ENCODE measurements at regions of chr5 and their contacts with region 1.

Region 1: GRCh38 chr5:159010661-159011442 is 88.9 kb downstream of the EBF1 start:
- DNase-seq: peak; percentile 84
- ATAC-seq: peak; percentile 91
- H3K4me3 ChIP-seq: peak overlapping the region; percentile 63
- H3K27ac ChIP-seq: peak overlapping the region; percentile 90
- H3K4me1 ChIP-seq: peaks cover 17% of the 10 kb centered on the region
- H3K27me3 ChIP-seq: no peaks in the 10 kb centered on the region
- CTCF ChIP-seq: no peak
- EP300 ChIP-seq: peak in 1 of 2 experiments; percentile 43; a peak in 1 of 4 replicates
- POLR2A ChIP-seq: peak; percentile 50
- RAD21 ChIP-seq: no peak

Region 2: DNA sequence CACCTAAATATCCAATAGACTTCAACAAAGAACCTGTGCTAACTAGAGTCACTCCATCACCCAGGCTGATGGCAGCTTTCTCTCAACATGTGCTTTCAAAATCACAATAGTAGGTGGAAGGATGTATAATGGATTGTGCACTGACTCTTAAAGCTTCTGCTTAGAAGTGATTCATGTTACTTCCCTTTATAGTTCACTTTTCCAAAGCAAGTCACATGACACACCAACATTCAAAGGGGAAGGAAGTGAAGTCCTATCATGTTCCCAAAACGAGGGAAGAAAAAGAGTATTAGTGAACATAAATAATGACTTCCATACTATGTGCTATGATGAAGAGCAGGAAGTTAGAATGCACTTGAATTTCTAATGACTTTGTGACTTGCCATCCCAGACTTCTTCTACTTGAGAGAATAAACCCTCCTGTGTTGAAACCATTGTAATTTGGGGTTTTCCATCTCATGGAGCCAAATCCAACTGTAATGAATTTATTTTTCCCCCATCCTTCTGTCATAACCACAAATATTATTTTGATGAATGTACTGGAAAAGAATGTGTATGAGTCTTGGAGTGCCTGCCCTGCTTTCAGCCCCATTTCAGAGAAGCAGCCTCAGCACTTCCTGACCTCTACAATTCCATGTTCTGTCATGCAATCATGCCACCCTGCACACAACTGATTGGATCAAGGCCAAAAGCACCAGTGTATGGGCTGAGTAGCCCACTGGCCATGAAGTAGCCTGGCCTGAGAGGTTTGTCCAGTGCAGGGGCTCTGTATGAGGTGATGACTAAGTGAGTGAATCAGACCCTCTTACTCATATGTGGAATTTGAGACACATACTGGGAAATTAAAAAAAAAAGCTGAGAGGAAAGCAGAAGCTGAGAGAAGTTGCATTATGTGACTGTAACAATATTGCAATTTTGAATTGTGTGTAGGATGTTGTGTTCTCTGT is 626.0 kb before region 1 on chr5:
- CTCF ChIA-PET with region 1: no interaction called
- POLR2A ChIA-PET with region 1: no interaction called
- RAD21 ChIA-PET with region 1: no interaction called
- SMC1A ChIA-PET with region 1: no interaction called
- in situ Hi-C with region 1: no loop called
- intact Hi-C with region 1: no loop called
- DNase-seq: no peak
- ATAC-seq: no peak
- H3K4me3 ChIP-seq: no peak overlapping the region
- H3K27ac ChIP-seq: no peak overlapping the region
- H3K4me1 ChIP-seq: no peaks in the 10 kb centered on the region; the same call in 1 of the 2 replicates
- H3K27me3 ChIP-seq: no peaks in the 10 kb centered on the region
- CTCF ChIP-seq: no peak
- EP300 ChIP-seq: no peak
- POLR2A ChIP-seq: no peak
- RAD21 ChIP-seq: no peak

Region 3: DNA sequence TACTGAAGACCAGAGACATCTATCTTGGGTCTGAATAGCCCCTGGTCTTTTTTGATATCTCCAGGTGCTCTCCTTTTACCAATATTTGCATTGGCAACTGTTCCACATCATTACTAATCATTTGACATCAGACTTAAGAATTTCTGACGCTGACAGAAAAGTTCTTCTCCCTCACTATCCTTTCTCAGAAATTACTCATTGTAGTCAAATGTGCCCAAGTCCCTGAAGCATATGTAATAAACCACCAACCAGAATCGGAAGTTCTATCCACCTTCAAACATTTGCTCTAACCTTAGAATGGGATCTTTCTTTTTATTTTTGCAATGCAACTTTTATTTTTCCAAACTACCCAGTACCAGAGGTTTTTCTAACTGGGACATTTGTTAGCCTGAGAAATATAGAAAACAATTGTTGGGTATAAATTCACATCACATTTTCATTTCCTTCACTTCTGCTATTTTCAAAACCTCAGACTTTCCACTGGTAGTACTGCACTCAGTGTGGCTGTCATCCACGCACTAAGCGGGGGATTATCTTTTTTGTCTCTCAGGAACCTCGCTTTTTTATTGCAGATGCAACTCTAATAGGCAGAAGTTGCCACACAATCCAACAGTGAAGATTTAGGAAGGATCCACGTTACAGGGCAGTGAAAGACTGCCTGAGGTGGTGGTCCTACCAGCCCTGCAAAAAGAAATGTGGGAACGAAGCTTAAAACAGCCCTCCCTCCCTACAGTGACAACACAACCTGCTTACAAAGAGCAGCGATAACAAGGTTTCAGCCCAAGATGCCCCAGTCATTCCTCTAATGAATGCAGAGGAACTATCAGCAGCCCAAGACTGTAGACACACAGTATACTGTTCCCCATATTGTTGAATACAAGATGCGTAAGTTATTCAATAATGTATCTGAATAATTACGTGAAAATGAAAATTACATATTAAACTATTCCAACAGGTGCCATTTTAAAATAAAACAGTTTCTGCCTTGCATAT is 112.4 kb before region 1 on chr5:
- CTCF ChIA-PET with region 1: no interaction called
- POLR2A ChIA-PET with region 1: interaction called, 3 read pairs
- RAD21 ChIA-PET with region 1: interaction called, 4 read pairs
- SMC1A ChIA-PET with region 1: interaction called, 6 read pairs
- in situ Hi-C with region 1: no loop called
- intact Hi-C with region 1: loop called (anchors 5 kb)
- DNase-seq: no peak
- ATAC-seq: peak; percentile 82
- H3K4me3 ChIP-seq: 0 out of 2 replicates have a peak overlapping the region, but pooled peaks have one; percentile 15
- H3K27ac ChIP-seq: peak overlapping the region; percentile 83
- H3K4me1 ChIP-seq: peaks cover 14% of the 10 kb centered on the region
- H3K27me3 ChIP-seq: no peaks in the 10 kb centered on the region
- CTCF ChIP-seq: no peak
- EP300 ChIP-seq: peak; percentile 70 to 74; a peak in 3 of 4 replicates
- POLR2A ChIP-seq: no peak
- RAD21 ChIP-seq: no peak

Region 4: DNA sequence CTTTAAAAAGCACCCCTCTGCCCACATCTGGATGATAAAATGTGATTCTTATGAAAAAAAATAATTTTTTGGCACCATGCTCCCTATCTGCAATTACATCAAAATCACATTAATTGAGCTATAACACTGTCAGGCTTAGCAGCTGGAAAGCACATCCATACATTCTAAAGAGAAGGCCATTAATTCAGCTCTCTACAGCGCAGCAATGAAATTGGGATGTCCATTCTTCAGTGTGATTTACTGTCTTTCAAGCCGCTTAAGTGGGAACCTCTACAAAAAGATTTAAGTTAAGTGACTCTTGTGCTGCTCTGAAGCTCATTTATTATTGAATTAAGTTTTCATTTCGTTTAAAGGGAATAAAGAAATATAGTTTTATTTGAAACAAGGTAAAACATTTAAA is 82.5 kb before region 1 on chr5:
- CTCF ChIA-PET with region 1: no interaction called
- POLR2A ChIA-PET with region 1: interaction called, 15 read pairs
- RAD21 ChIA-PET with region 1: interaction called, 6 read pairs
- SMC1A ChIA-PET with region 1: interaction called, 16 read pairs
- in situ Hi-C with region 1: no loop called
- intact Hi-C with region 1: no loop called
- DNase-seq: no peak
- ATAC-seq: no peak
- H3K4me3 ChIP-seq: no peak overlapping the region
- H3K27ac ChIP-seq: no peak overlapping the region
- H3K4me1 ChIP-seq: peaks cover 3% of the 10 kb centered on the region
- H3K27me3 ChIP-seq: no peaks in the 10 kb centered on the region
- CTCF ChIP-seq: no peak
- EP300 ChIP-seq: no peak
- POLR2A ChIP-seq: no peak
- RAD21 ChIP-seq: no peak

Region 5: GRCh38 chr5:158995694-158996173 is 15.1 kb before region 1 on chr5:
- CTCF ChIA-PET with region 1: interaction called, 9 read pairs
- POLR2A ChIA-PET with region 1: interaction called, 11 read pairs
- RAD21 ChIA-PET with region 1: interaction called, 12 read pairs
- SMC1A ChIA-PET with region 1: interaction called, 21 read pairs
- in situ Hi-C with region 1: no loop called
- intact Hi-C with region 1: no loop called
- DNase-seq: no peak
- ATAC-seq: peak; percentile 93
- H3K4me3 ChIP-seq: no peak overlapping the region
- H3K27ac ChIP-seq: no peak overlapping the region
- H3K4me1 ChIP-seq: peaks cover 6% of the 10 kb centered on the region; the same call in 1 of the 2 replicates
- H3K27me3 ChIP-seq: no peaks in the 10 kb centered on the region
- CTCF ChIP-seq: no peak
- EP300 ChIP-seq: no peak
- POLR2A ChIP-seq: no peak
- RAD21 ChIP-seq: no peak

Region 6: DNA sequence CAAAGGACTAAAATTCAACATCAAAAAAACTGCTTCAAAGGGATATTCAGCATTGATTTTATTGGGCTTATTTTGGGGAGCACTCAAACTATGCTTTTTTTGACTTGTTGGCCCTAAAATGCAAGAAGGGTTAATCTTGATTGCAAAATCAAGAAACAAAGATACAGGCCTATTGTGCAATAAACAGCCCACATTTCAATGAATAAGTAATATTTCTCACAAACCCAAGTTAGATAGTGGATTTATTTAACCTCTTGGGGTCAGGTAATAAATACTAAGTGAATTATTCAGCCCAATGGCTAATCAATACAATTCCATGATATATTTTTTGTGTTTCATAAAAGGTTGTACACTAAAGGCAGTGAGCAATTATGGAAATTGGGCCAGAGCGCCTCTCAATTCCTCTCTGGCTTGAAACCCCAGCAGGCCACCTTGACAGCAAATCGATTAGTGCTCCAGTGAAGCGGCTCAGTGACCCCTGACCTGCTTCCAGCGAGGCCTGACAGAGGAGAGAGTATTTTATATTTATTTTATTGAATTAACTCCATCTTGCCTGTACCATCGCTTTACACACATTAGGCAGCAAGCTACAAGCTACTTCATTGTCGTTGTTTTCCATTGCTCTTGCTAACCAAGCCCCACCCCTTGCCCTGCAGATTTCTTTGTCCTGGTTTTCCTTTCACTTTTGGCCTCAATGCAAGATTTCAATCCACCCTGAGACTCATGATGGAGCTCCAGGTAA is 23.4 kb after region 1 on chr5:
- CTCF ChIA-PET with region 1: interaction called, 5 read pairs
- POLR2A ChIA-PET with region 1: interaction called, 8 read pairs
- RAD21 ChIA-PET with region 1: interaction called, 7 read pairs
- SMC1A ChIA-PET with region 1: interaction called, 86 read pairs
- in situ Hi-C with region 1: no loop called
- intact Hi-C with region 1: no loop called
- DNase-seq: no peak
- ATAC-seq: peak; percentile 84
- H3K4me3 ChIP-seq: peak overlapping the region; percentile 33
- H3K27ac ChIP-seq: peak overlapping the region; percentile 61
- H3K4me1 ChIP-seq: peaks cover 37% of the 10 kb centered on the region
- H3K27me3 ChIP-seq: no peaks in the 10 kb centered on the region
- CTCF ChIP-seq: no peak
- EP300 ChIP-seq: no peak
- POLR2A ChIP-seq: no peak
- RAD21 ChIP-seq: no peak

Region 7: DNA sequence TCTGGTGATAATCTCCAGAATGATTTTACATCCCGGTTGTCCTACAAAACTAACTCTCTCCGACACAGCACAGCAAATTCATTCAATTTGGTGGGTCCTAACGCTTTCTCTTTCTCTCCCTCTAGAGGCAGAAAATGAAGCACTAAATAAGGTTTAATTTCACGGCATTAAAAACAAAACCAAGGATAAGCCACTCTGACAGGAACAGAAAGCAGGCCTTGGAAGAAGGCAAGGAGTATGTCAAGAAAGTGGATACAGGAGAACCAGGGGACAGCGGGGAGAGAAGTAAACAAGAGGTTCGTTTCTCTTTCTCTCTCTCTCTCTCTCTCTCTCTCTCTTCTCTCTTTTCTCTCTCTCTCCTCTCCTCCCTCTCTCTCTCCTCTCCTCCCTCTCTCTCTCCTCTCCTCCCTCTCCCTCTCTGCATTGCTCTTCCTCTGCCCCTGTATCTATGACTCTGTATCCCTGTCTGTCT is 39.0 kb after region 1 on chr5:
- CTCF ChIA-PET with region 1: interaction called, 5 read pairs
- POLR2A ChIA-PET with region 1: interaction called, 8 read pairs
- RAD21 ChIA-PET with region 1: interaction called, 8 read pairs
- SMC1A ChIA-PET with region 1: interaction called, 12 read pairs
- in situ Hi-C with region 1: no loop called
- intact Hi-C with region 1: no loop called
- DNase-seq: no peak
- ATAC-seq: peak; percentile 1
- H3K4me3 ChIP-seq: peak overlapping the region; percentile 49
- H3K27ac ChIP-seq: peak overlapping the region; percentile 70
- H3K4me1 ChIP-seq: peaks cover 17% of the 10 kb centered on the region
- H3K27me3 ChIP-seq: no peaks in the 10 kb centered on the region
- CTCF ChIP-seq: peak; percentile 15 to 45 (median 32); a peak in 5 of 6 replicates
- EP300 ChIP-seq: no peak
- POLR2A ChIP-seq: no peak
- RAD21 ChIP-seq: peak; percentile 59

Region 8: GRCh38 chr5:159100025-159100781 is 89.4 kb after region 1 on chr5:
- CTCF ChIA-PET with region 1: interaction called, 3 read pairs
- POLR2A ChIA-PET with region 1: interaction called, 4 read pairs
- RAD21 ChIA-PET with region 1: interaction called, 10 read pairs
- SMC1A ChIA-PET with region 1: interaction called, 11 read pairs
- in situ Hi-C with region 1: no loop called
- intact Hi-C with region 1: loop called (anchors 2 kb)
- DNase-seq: peak; percentile 81
- ATAC-seq: peak; percentile 58
- H3K4me3 ChIP-seq: peak overlapping the region; percentile 67
- H3K27ac ChIP-seq: peak overlapping the region; percentile 67
- H3K4me1 ChIP-seq: peaks cover 5% of the 10 kb centered on the region
- H3K27me3 ChIP-seq: no peaks in the 10 kb centered on the region
- CTCF ChIP-seq: no peak
- EP300 ChIP-seq: peak in 1 of 2 experiments; percentile 1; a peak in 2 of 4 replicates
- POLR2A ChIP-seq: peak; percentile 93
- RAD21 ChIP-seq: no peak

Measured in GM12878 (cell line).